ENCODE measurements at regions of chr2 and their contacts with region 1.

Region 1: DNA sequence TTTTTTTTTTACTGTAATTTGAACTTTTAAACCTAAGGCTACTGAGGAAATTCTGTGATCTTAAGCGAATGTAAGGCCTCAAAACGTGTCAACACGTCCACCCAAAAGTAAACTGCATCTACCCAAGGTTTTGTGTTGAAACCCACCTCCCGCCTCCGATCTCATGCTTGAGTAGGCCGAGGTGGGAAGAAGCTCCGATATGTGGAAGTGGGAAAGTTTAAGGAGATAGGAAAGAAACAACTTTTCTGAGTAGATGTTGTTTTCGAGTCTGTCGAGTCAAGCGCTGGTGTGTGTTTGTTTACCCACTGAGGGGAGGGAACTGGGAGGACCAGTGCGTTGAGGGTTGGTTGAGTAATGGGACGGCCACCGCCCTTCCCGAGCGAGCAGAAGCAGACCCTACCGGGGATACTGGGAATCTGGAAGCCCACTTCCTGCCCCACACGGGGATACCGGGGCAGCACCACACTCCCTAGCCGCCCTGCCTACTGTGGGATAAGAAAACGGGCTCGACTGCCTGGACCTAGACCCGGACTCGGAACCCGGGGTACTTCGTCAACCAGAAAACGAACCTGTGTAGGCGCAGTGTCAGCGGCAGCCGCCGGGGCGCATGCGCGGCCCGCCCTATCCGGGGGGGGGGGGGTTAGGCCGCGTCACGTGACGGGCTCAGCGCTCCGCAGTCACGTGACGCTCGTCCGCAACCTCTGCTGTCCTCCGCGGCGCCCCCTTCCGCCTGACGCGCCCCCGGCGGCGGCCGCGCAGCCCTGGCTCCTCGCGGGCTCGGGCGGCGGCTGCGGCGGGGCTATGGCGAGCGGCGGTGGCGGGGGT is at the start of gene RETREG2:
- DNase-seq: peak; percentile 97
- ATAC-seq: peak; percentile 44
- H3K4me3 ChIP-seq: peak within 1 kb of the TSS; percentile 87 to 97 (median 95)
- H3K4me3 Mint-ChIP-seq: peak within 1 kb of the TSS; percentile 99
- H3K27ac ChIP-seq: peak within 1 kb of the TSS; percentile 94 to 97
- H3K27ac Mint-ChIP-seq: peak within 1 kb of the TSS; percentile 99
- H3K4me1 ChIP-seq: peaks cover 17 to 48% of the 10 kb centered on the region in 2 donors
- H3K4me1 Mint-ChIP-seq: peaks cover 46% of the 10 kb centered on the region
- H3K27me3 ChIP-seq: no peaks in the 10 kb centered on the region
- H3K27me3 Mint-ChIP-seq: no peaks in the 10 kb centered on the region
- CTCF ChIP-seq: peak; percentile 55
- total RNA-seq, gene RETREG2: 86.3 and 102 TPM in 2 replicates

Region 2: DNA sequence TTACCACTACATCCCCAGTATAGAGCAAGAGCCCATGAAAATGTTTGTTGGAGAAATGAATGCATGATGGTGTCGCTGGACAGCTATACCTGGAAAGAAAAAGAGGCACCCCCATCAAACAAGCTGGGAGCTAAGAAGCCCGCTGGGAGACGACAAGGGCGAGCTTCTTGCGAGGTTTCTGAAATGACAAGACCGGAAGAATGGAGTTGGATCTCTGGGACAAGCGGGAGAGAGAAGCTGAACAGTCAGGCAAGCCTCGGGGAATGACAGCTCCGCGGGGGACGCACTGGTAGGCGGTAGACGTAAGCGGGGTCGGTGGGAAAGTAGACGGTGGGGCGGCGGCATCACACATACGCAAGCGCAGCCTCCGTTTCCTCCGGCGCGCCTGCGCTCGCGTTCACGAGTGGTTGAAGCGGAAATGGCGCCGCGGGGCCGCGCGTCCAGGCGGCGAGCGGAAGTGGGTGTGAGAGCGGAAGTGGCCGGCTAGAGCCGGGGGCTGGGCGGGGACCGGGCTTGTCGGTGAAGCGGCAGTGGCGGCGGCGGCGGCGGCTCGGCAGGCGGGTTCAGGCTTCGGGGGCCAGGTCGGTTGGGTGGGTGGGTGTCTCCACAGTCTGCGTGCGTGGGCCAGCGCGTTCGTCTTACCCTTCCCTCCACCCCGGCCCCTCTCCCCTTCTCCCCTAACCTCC is 960.9 kb before region 1 on chr2 and contains the start of gene ARPC2:
- CTCF ChIA-PET with region 1: no interaction called
- POLR2A ChIA-PET with region 1: no interaction called
- intact Hi-C with region 1: loop called (anchors 5 kb)
- DNase-seq: peak; percentile 98
- ATAC-seq: peak; percentile 74
- H3K4me3 ChIP-seq: peak within 1 kb of the TSS; percentile 93 to 99 (median 97)
- H3K4me3 Mint-ChIP-seq: peak within 1 kb of the TSS; percentile 90
- H3K27ac ChIP-seq: peak within 1 kb of the TSS; percentile 95 to 99
- H3K27ac Mint-ChIP-seq: peak within 1 kb of the TSS; percentile 94
- H3K4me1 ChIP-seq: peaks cover 36 to 45% of the 10 kb centered on the region in 2 donors
- H3K4me1 Mint-ChIP-seq: peaks cover 43% of the 10 kb centered on the region
- H3K27me3 ChIP-seq: no peaks in the 10 kb centered on the region
- H3K27me3 Mint-ChIP-seq: no peaks in the 10 kb centered on the region
- CTCF ChIP-seq: no peak
- total RNA-seq, gene ARPC2: 343 and 352 TPM in 2 replicates

Region 3: GRCh38 chr2:218876562-218877219 is 301.1 kb before region 1 on chr2:
- CTCF ChIA-PET with region 1: interaction called, 4 read pairs
- POLR2A ChIA-PET with region 1: interaction called, 4 read pairs
- intact Hi-C with region 1: loop called (anchors 2 kb)
- DNase-seq: peak; percentile 87
- ATAC-seq: no peak
- H3K4me3 ChIP-seq: no peak overlapping the region
- H3K4me3 Mint-ChIP-seq: peak overlapping the region; percentile 2
- H3K27ac ChIP-seq: no peak overlapping the region
- H3K27ac Mint-ChIP-seq: peak overlapping the region; percentile 23
- H3K4me1 ChIP-seq: peaks cover 54 to 70% of the 10 kb centered on the region in 2 donors
- H3K4me1 Mint-ChIP-seq: peaks cover 59% of the 10 kb centered on the region
- H3K27me3 ChIP-seq: peaks cover 0 to 40% (median 17%) of the 10 kb centered on the region in 4 experiments
- H3K27me3 Mint-ChIP-seq: peaks cover 19% of the 10 kb centered on the region
- CTCF ChIP-seq: peak; percentile 94

Region 4: GRCh38 chr2:219229305-219230058 is 51.7 kb after region 1 on chr2 and contains the starts of genes ANKZF1 and ATG9A:
- CTCF ChIA-PET with region 1: interaction called, 5 read pairs
- POLR2A ChIA-PET with region 1: interaction called, 10 read pairs
- intact Hi-C with region 1: loop called (anchors 1 kb)
- DNase-seq: peak; percentile 98
- ATAC-seq: peak; percentile 97
- H3K4me3 ChIP-seq: peak within 1 kb of the TSS; percentile 86 to 98 (median 92)
- H3K4me3 Mint-ChIP-seq: peak within 1 kb of the TSS; percentile 99
- H3K27ac ChIP-seq: peak within 1 kb of the TSS; percentile 74 to 87
- H3K27ac Mint-ChIP-seq: peak within 1 kb of the TSS; percentile 98
- H3K4me1 ChIP-seq: peaks cover 17 to 23% of the 10 kb centered on the region in 2 donors
- H3K4me1 Mint-ChIP-seq: peaks cover 38% of the 10 kb centered on the region
- H3K27me3 ChIP-seq: no peaks in the 10 kb centered on the region
- H3K27me3 Mint-ChIP-seq: no peaks in the 10 kb centered on the region
- CTCF ChIP-seq: no peak
- total RNA-seq, gene ANKZF1: 181 and 199 TPM in 2 replicates
- total RNA-seq, gene ATG9A: 59.4 and 65.5 TPM in 2 replicates

Region 5: GRCh38 chr2:219278655-219279516 is 101.1 kb after region 1 on chr2 and contains the start of gene DNAJB2:
- CTCF ChIA-PET with region 1: interaction called, 11 read pairs
- POLR2A ChIA-PET with region 1: interaction called, 39 read pairs
- intact Hi-C with region 1: loop called (anchors 1 kb)
- DNase-seq: peak; percentile 99
- ATAC-seq: peak; percentile 76
- H3K4me3 ChIP-seq: peak within 1 kb of the TSS; percentile 49 to 80 (median 77)
- H3K4me3 Mint-ChIP-seq: peak within 1 kb of the TSS; percentile 92
- H3K27ac ChIP-seq: peak within 1 kb of the TSS; percentile 98 to 100
- H3K27ac Mint-ChIP-seq: peak within 1 kb of the TSS; percentile 96
- H3K4me1 ChIP-seq: peaks cover 32 to 48% of the 10 kb centered on the region in 2 donors
- H3K4me1 Mint-ChIP-seq: peaks cover 48% of the 10 kb centered on the region
- H3K27me3 ChIP-seq: no peaks in the 10 kb centered on the region
- H3K27me3 Mint-ChIP-seq: no peaks in the 10 kb centered on the region
- CTCF ChIP-seq: no peak
- total RNA-seq, gene DNAJB2: 169 and 184 TPM in 2 replicates

Region 6: DNA sequence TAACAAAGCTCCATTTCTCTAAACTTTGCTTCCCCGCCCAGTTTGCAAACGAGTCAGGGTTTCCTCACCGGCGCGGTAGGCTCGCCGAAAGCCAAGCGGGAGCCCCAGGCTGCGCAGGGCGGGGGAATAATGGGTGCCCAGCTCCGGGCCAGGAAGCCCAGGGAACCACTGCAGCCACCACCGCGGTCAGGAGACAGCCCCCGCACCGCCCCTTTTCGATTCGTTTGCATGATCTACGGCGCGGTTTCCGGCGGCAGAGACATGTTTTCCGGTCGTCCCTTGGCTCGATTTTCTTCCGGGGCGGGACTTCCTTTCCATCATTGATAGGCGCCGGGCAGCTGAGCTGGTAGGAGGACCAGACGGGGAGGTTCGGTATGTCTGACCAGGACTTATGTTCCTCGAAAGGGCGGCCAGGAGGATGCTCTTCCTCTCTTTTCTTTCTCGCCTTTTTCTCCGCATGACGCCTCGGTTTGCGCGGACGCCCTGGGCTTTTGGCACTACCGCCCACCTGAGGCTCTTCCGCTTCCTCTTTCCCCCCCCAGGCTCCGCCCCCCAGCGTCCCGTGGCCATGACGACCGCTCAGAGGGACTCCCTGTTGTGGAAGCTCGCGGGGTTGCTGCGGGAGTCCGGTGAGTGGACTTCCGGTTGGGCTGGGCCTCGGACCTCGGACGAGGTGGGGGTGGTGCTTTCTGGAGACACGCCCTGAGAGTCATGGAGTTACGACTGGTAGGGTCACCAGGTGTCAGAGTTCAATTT is 420.0 kb after region 1 on chr2 and contains the start of gene STK11IP:
- CTCF ChIA-PET with region 1: interaction called, 3 read pairs
- POLR2A ChIA-PET with region 1: no interaction called
- intact Hi-C with region 1: loop called (anchors 2 kb)
- DNase-seq: peak; percentile 96
- ATAC-seq: peak; percentile 88
- H3K4me3 ChIP-seq: peak within 1 kb of the TSS; percentile 69 to 88 (median 86)
- H3K4me3 Mint-ChIP-seq: peak within 1 kb of the TSS; percentile 98
- H3K27ac ChIP-seq: peak within 1 kb of the TSS; percentile 59 to 88
- H3K27ac Mint-ChIP-seq: peak within 1 kb of the TSS; percentile 98
- H3K4me1 ChIP-seq: peaks cover 10 to 12% of the 10 kb centered on the region in 2 donors
- H3K4me1 Mint-ChIP-seq: peaks cover 23% of the 10 kb centered on the region
- H3K27me3 ChIP-seq: peaks cover 0 to 11% (median 0%) of the 10 kb centered on the region in 4 experiments
- H3K27me3 Mint-ChIP-seq: peaks cover 10% of the 10 kb centered on the region
- CTCF ChIP-seq: no peak
- total RNA-seq, gene STK11IP: 55.6 and 60.8 TPM in 2 replicates

Region 7: GRCh38 chr2:219912491-219912921 is 734.7 kb after region 1 on chr2:
- CTCF ChIA-PET with region 1: no interaction called
- POLR2A ChIA-PET with region 1: no interaction called
- intact Hi-C with region 1: no loop called
- DNase-seq: no peak
- ATAC-seq: no peak
- H3K4me3 ChIP-seq: no peak overlapping the region
- H3K4me3 Mint-ChIP-seq: no peak overlapping the region
- H3K27ac ChIP-seq: no peak overlapping the region
- H3K27ac Mint-ChIP-seq: no peak overlapping the region
- H3K4me1 ChIP-seq: no peaks in the 10 kb centered on the region
- H3K4me1 Mint-ChIP-seq: no peaks in the 10 kb centered on the region
- H3K27me3 ChIP-seq: no peaks in the 10 kb centered on the region
- H3K27me3 Mint-ChIP-seq: no peaks in the 10 kb centered on the region
- CTCF ChIP-seq: no peak